Body of pancreas (tissue), 4 donors: ENCODE measurements at regions of chr11 and their contacts with region 1.

Region 1: GRCh38 chr11:7982582-7983119 is 4.5 kb upstream of the EIF3F start:
- DNase-seq: no peak
- ATAC-seq: no peak
- H3K4me3 ChIP-seq: no peak overlapping the region
- H3K27ac ChIP-seq: no peak overlapping the region
- H3K4me1 ChIP-seq: peaks cover 44% of the 10 kb centered on the region
- H3K27me3 ChIP-seq: no peaks in the 10 kb centered on the region
- CTCF ChIP-seq: no peak
- POLR2A ChIP-seq: no peak

Region 2: DNA sequence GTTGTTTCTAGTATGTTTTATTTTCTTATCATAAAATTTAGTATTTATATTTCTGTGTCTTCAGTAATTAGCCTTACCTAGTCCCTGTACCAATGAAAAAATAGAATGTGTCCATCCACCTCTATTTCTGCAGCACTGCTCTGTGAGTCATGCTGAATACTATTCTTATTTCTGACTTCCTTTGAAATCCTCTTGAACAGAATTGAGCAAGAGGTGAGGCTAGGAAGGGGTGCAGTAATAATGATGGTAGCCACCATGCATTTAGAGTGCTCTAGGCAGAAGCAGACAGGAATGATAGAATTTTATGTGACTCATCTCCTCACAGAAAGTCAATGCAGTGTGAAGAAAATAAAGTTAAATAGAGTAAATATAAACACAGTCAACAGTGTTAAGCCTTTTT is 111.6 kb before region 1 on chr11:
- intact Hi-C with region 1: no loop called
- DNase-seq: no peak
- ATAC-seq: no peak
- H3K4me3 ChIP-seq: no peak overlapping the region
- H3K27ac ChIP-seq: no peak overlapping the region
- H3K4me1 ChIP-seq: no peaks in the 10 kb centered on the region
- H3K27me3 ChIP-seq: no peaks in the 10 kb centered on the region
- CTCF ChIP-seq: no peak
- POLR2A ChIP-seq: no peak

Region 3: DNA sequence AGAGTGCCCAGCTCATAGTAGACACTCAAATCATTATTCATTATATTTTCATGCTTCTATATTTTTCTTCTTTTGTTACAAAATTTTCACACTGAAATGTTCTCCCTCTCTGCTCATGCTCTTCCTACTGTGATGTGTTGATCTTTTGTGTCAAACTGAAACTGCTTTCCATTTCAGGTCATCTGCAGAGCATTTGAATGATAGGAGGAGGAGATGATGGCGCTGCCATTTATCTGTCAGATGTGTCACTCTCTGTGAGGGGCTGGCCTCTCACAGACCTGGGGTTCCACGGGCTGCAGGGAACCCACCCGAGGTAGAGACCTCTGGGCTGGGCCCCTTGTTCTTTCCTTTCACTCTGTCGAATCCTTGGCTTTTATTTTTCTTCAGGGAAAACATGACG is 92.7 kb before region 1 on chr11:
- intact Hi-C with region 1: loop called (anchors 5 kb)
- DNase-seq: no peak
- ATAC-seq: no peak
- H3K4me3 ChIP-seq: no peak overlapping the region
- H3K27ac ChIP-seq: no peak overlapping the region
- H3K4me1 ChIP-seq: peaks cover 25% of the 10 kb centered on the region
- H3K27me3 ChIP-seq: no peaks in the 10 kb centered on the region
- CTCF ChIP-seq: no peak
- POLR2A ChIP-seq: no peak